ENCODE measurements at regions of chr17 and their contacts with region 1.

Region 1: DNA sequence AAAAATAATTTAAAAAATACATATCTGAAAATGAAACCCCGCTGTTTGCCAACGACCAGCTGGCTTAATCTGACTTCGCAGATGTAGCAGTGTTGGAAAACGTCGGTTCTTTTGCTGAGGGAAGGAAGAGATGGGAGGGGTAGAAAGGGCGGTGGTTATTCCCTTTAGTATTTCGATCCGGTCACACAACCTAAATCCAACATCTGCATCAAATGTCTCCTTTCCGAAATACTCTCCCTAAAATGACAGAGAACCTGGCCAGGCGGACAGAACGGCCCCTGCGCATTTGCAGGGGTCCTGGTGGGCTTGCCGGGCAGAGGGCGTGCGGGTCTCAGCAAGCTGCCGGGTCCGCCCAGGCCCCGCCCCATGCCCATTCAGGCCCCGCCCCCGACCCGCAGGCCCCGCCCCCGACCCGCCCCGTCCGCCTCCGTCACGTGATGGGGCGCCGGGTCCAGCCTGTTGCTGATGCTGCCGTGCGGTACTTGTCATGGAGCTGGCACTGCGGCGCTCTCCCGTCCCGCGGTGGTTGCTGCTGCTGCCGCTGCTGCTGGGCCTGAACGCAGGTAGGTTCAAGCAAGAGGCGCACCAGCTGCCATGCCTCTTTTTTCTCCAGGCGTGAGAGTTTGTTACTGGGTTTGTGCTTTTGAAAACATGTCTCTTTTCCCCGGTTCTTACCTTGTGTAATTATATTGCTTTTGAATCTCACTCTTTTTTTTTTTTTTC is at the start of gene SCPEP1:
- DNase-seq: peak; percentile 65 to 82 (median 76)
- ATAC-seq: peak; percentile 99
- H3K4me3 ChIP-seq: peak within 1 kb of the TSS; percentile 92
- H3K4me3 Mint-ChIP-seq: peak within 1 kb of the TSS; percentile 85 to 96 (median 93)
- H3K27ac ChIP-seq: peak within 1 kb of the TSS; percentile 63
- H3K27ac Mint-ChIP-seq: peak within 1 kb of the TSS; percentile 70 to 98 (median 86)
- H3K4me1 ChIP-seq: peaks cover 10 to 12% of the 10 kb centered on the region in 2 donors
- H3K4me1 Mint-ChIP-seq: peaks cover 11 to 33% (median 24%) of the 10 kb centered on the region in 7 donors
- H3K27me3 ChIP-seq: no peaks in the 10 kb centered on the region
- H3K27me3 Mint-ChIP-seq: peaks cover 0 to 32% (median 0%) of the 10 kb centered on the region in 5 donors
- total RNA-seq, gene SCPEP1: 8.4 to 81.6 (median 27.1) TPM

Region 2: DNA sequence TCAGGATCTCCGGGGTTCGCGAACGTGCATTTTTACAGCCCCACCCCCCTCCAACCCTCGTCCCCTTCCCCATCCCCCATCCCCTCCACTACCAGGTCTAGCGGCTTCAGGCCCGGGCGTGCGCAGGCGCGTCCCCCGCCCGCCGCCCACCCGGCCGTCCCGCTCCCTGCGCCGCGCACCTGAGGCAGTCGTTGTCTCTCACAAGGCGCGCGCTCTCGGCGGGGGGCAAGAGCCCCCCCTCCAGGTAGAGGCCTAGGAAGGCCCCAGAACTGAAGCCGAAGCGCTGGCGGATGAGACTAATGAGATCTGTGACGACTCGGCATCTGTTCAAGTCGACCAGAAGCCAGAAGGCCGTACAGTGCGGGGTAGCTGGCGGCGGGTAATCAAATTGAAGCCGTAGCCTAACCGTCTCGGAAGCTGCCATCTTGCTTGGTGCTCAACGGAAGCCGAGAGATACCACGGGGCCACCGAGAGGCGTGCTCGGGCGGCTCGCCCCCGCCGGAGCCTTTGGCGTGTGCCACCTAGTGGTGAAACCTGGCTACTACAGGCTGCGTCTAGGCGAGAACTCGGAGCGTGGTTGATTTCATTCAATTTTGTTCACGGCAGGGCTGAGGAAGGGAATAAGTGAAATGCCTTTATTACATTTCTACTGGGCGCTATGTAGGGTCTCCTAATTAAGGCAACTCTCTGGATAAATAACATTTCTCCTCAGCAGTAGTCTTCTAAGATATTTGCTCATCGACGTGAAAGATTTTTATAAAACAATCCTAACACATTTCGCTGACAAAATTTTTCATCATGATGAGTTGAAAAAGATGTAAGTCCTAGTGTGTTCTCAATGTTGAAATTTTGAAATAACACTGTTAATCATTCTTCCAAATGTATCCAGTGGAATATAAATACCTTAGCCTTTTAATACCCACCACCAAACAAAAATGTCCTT is 17.0 kb before region 1 on chr17 and contains the start of gene COIL:
- CTCF ChIA-PET with region 1: no interaction called
- POLR2A ChIA-PET with region 1: interaction called, 6 read pairs
- intact Hi-C with region 1: loop called (anchors 1 kb)
- DNase-seq: peak; percentile 90 to 96 (median 92)
- ATAC-seq: peak; percentile 100
- H3K4me3 ChIP-seq: peak within 1 kb of the TSS; percentile 80
- H3K4me3 Mint-ChIP-seq: peak within 1 kb of the TSS; percentile 80 to 93 (median 86)
- H3K27ac ChIP-seq: peak within 1 kb of the TSS; percentile 97
- H3K27ac Mint-ChIP-seq: peak within 1 kb of the TSS; percentile 78 to 95 (median 91)
- H3K4me1 ChIP-seq: peaks cover 6 to 11% of the 10 kb centered on the region in 2 donors
- H3K4me1 Mint-ChIP-seq: peaks cover 14 to 34% (median 28%) of the 10 kb centered on the region in 7 donors
- H3K27me3 ChIP-seq: no peaks in the 10 kb centered on the region
- H3K27me3 Mint-ChIP-seq: peaks cover 0 to 3% (median 0%) of the 10 kb centered on the region in 5 donors
- total RNA-seq, gene COIL: 13.1 to 22.7 (median 19.0) TPM

Region 3: DNA sequence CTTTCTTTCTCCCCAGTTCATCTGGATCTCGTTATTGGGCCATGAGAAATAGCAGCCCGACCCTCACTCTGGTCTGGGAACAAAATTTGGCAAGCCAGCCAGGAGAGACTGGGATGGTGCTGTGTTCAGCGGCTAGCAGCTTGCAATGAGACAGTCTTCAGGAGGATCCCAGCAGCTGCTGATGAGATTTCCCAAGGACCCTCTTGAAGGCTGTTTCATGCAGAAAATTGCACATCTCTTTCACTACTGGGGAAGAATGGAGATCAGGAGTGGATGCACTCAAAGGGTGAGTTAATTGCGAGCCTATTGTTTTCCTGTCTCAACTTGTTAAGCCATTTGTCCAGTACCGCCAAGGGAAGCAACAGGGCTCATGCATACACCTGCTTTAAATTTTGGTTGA is 11.5 kb before region 1 on chr17:
- CTCF ChIA-PET with region 1: interaction called, 3 read pairs
- POLR2A ChIA-PET with region 1: interaction called, 11 read pairs
- intact Hi-C with region 1: loop called (anchors 1 kb)
- DNase-seq: no peak
- ATAC-seq: no peak
- H3K4me3 ChIP-seq: no peak overlapping the region
- H3K4me3 Mint-ChIP-seq: no peak overlapping the region
- H3K27ac ChIP-seq: no peak overlapping the region
- H3K27ac Mint-ChIP-seq: no peak overlapping the region
- H3K4me1 ChIP-seq: no peaks in the 10 kb centered on the region
- H3K4me1 Mint-ChIP-seq: peaks cover 0 to 6% (median 0%) of the 10 kb centered on the region in 7 donors
- H3K27me3 ChIP-seq: no peaks in the 10 kb centered on the region
- H3K27me3 Mint-ChIP-seq: peaks cover 0 to 23% (median 0%) of the 10 kb centered on the region in 5 donors

Region 4: GRCh38 chr17:57009737-57010445 is 32.1 kb after region 1 on chr17:
- CTCF ChIA-PET with region 1: no interaction called
- POLR2A ChIA-PET with region 1: no interaction called
- intact Hi-C with region 1: loop called in 1 of 2 experiments (anchors 2 kb)
- DNase-seq: peak; percentile 10 to 54 (median 41)
- ATAC-seq: peak; percentile 91
- H3K4me3 ChIP-seq: no peak overlapping the region
- H3K4me3 Mint-ChIP-seq: peak overlapping the region in 9 of 10 donors; percentile 13 to 84 (median 66)
- H3K27ac ChIP-seq: no peak overlapping the region
- H3K27ac Mint-ChIP-seq: peak overlapping the region in 3 of 9 donors; percentile 1 to 57 (median 10)
- H3K4me1 ChIP-seq: no peaks in the 10 kb centered on the region
- H3K4me1 Mint-ChIP-seq: peaks cover 6 to 15% (median 10%) of the 10 kb centered on the region in 7 donors
- H3K27me3 ChIP-seq: no peaks in the 10 kb centered on the region
- H3K27me3 Mint-ChIP-seq: peaks cover 0 to 17% (median 0%) of the 10 kb centered on the region in 5 donors